PC-3 (cell line): ENCODE measurements at regions of chr1 and their contacts with region 1.

Region 1: DNA sequence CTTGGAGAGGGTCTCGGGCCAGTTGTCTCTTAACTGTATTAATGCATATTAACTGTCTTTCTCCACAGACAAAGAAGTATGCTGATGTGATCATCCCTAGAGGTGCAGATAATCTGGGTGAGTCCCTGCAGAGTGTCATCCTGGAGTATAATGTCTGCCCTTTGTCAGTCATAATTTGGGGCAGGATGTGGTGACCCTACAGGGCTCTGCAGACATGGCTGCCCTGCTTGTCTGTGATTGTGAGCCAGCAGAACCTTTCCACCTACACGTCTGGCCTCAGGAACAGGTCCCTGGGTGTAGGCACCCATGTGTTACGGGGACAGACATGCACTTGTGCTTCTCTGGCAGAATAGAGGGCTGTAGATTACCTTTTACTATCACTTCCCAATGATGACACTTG is 78.4 kb downstream of the UCK2 start:
- DNase-seq: no peak
- ATAC-seq: no peak
- H3K4me3 ChIP-seq: no peak overlapping the region
- H3K27ac ChIP-seq: no peak overlapping the region
- H3K4me1 ChIP-seq: peaks cover 9% of the 10 kb centered on the region
- H3K27me3 ChIP-seq: no peaks in the 10 kb centered on the region
- CTCF ChIP-seq: no peak

Region 2: GRCh38 chr1:165836664-165837482 is 69.0 kb before region 1 on chr1:
- CTCF ChIA-PET with region 1: no interaction called
- POLR2A ChIA-PET with region 1: no interaction called
- intact Hi-C with region 1: no loop called
- DNase-seq: no peak
- ATAC-seq: no peak
- H3K4me3 ChIP-seq: no peak overlapping the region
- H3K27ac ChIP-seq: no peak overlapping the region
- H3K4me1 ChIP-seq: peaks cover 7% of the 10 kb centered on the region
- H3K27me3 ChIP-seq: no peaks in the 10 kb centered on the region
- CTCF ChIP-seq: no peak

Region 3: DNA sequence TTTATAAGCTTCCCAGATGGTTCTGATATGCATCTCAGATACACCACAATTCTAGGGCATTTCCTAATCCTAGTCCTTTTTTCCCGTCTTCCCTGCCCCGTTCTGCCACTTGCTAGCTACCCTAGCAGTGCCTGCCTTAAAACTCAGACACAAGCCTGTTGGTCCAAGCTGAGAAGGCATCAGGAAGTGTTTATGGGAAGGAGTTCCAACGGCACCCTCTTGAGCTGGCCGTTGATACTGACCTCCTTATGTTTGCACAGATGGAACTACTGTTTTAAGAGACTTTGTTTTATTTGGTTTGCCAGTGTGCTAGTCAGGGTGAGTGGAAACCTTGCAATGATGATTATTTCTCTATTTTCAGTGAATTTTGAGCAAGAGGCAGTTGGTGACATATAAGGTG is 11.3 kb before region 1 on chr1:
- CTCF ChIA-PET with region 1: no interaction called
- POLR2A ChIA-PET with region 1: interaction called, 10 read pairs
- intact Hi-C with region 1: no loop called
- DNase-seq: peak; percentile 16
- ATAC-seq: peak; percentile 29; the same call in 1 of the 2 replicates
- H3K4me3 ChIP-seq: no peak overlapping the region
- H3K27ac ChIP-seq: no peak overlapping the region
- H3K4me1 ChIP-seq: peaks cover 16% of the 10 kb centered on the region
- H3K27me3 ChIP-seq: no peaks in the 10 kb centered on the region
- CTCF ChIP-seq: no peak; the same call in 1 of the 2 replicates

Region 4: DNA sequence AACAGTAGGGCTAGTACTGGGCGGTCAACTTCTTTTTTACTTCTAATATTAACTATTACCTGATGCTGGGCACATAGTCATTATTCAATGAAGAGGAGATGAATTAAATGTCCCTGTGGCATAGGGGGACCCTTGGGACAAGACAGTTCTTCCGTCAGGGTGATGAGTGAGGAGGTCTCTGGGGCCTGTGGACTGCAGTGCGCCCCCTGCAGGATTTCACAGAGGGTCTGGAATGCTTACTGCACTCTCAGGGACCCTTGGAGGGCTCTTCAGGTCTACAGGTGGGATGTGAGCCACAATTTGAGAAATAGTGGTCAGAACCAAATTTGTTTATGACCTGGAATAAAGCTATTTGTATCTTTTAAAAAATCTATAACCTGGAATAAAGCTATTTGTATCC is 111.5 kb after region 1 on chr1:
- CTCF ChIA-PET with region 1: no interaction called
- POLR2A ChIA-PET with region 1: no interaction called
- intact Hi-C with region 1: no loop called
- DNase-seq: no peak
- ATAC-seq: no peak
- H3K4me3 ChIP-seq: no peak overlapping the region
- H3K27ac ChIP-seq: no peak overlapping the region
- H3K4me1 ChIP-seq: no peaks in the 10 kb centered on the region
- H3K27me3 ChIP-seq: peaks cover 25% of the 10 kb centered on the region
- CTCF ChIP-seq: peak; percentile 39; the same call in 1 of the 2 replicates